HCT116 (cell line): ENCODE measurements at regions of chr9 and their contacts with region 1.

Region 1: GRCh38 chr9:131349881-131350563 is 43.9 kb upstream of the PRRC2B start:
- DNase-seq: peak; percentile 62
- ATAC-seq: peak; percentile 96
- H3K4me3 ChIP-seq: peak overlapping the region; percentile 19 to 50; a peak in 3 of 4 replicates
- H3K27ac ChIP-seq: no peak overlapping the region
- H3K4me1 ChIP-seq: peaks cover 0 to 9% of the 10 kb centered on the region in 2 experiments; a peak in 1 of 4 replicates
- H3K27me3 ChIP-seq: no peaks in the 10 kb centered on the region
- CTCF ChIP-seq: peak; percentile 81 to 93 (median 86)
- POLR2A ChIP-seq: no peak
- RAD21 ChIP-seq: peak; percentile 93

Region 2: GRCh38 chr9:131334629-131335367 is 15.2 kb before region 1 on chr9:
- CTCF ChIA-PET with region 1: interaction called, 25 read pairs
- POLR2A ChIA-PET with region 1: no interaction called
- RAD21 ChIA-PET with region 1: no interaction called
- intact Hi-C with region 1: no loop called
- DNase-seq: no peak
- ATAC-seq: no peak
- H3K4me3 ChIP-seq: no peak overlapping the region
- H3K27ac ChIP-seq: no peak overlapping the region
- H3K4me1 ChIP-seq: peaks cover 5 to 31% of the 10 kb centered on the region in 2 experiments
- H3K27me3 ChIP-seq: no peaks in the 10 kb centered on the region
- CTCF ChIP-seq: no peak
- POLR2A ChIP-seq: no peak
- RAD21 ChIP-seq: no peak

Region 3: GRCh38 chr9:131361202-131361833 is 11.3 kb after region 1 on chr9:
- CTCF ChIA-PET with region 1: interaction called, 17 read pairs
- POLR2A ChIA-PET with region 1: no interaction called
- RAD21 ChIA-PET with region 1: no interaction called
- intact Hi-C with region 1: no loop called
- DNase-seq: no peak
- ATAC-seq: peak; percentile 38; the same call in 1 of the 2 replicates
- H3K4me3 ChIP-seq: no peak overlapping the region
- H3K27ac ChIP-seq: no peak overlapping the region
- H3K4me1 ChIP-seq: peaks cover 7 to 15% of the 10 kb centered on the region in 2 experiments; a peak in 3 of 4 replicates
- H3K27me3 ChIP-seq: no peaks in the 10 kb centered on the region
- CTCF ChIP-seq: no peak
- POLR2A ChIP-seq: no peak
- RAD21 ChIP-seq: no peak

Region 4: DNA sequence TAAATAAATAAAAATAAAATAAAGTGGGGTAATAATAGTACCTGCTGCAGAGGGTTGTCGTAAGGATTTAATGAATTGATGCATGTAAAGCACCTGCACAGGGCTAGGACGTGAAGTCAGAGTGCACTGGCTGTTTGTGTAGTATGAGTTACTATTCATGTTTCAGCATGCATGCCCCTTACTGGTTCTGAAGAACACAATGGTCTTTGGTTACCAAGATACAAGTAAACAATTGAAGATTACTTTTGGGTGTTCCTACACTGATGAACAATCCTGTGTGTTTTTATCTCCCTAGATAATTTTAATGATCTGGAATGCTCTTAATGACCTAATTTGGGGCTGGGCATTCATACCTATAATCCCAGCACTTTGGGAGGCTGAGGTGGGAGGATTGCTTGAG is 20.6 kb after region 1 on chr9:
- CTCF ChIA-PET with region 1: interaction called, 12 read pairs
- POLR2A ChIA-PET with region 1: no interaction called
- RAD21 ChIA-PET with region 1: no interaction called
- intact Hi-C with region 1: no loop called
- DNase-seq: no peak
- ATAC-seq: no peak
- H3K4me3 ChIP-seq: no peak overlapping the region
- H3K27ac ChIP-seq: no peak overlapping the region
- H3K4me1 ChIP-seq: peaks cover 18 to 26% of the 10 kb centered on the region in 2 experiments; a peak in 3 of 4 replicates
- H3K27me3 ChIP-seq: no peaks in the 10 kb centered on the region
- CTCF ChIP-seq: no peak
- POLR2A ChIP-seq: no peak
- RAD21 ChIP-seq: no peak

Region 5: GRCh38 chr9:131478421-131478868 is 128.4 kb after region 1 on chr9:
- CTCF ChIA-PET with region 1: interaction called, 4 read pairs
- POLR2A ChIA-PET with region 1: no interaction called
- RAD21 ChIA-PET with region 1: no interaction called
- intact Hi-C with region 1: loop called (anchors 1 kb)
- DNase-seq: peak; percentile 3
- ATAC-seq: peak; percentile 71
- H3K4me3 ChIP-seq: no peak overlapping the region
- H3K27ac ChIP-seq: no peak overlapping the region
- H3K4me1 ChIP-seq: no peaks in the 10 kb centered on the region
- H3K27me3 ChIP-seq: no peaks in the 10 kb centered on the region
- CTCF ChIP-seq: peak; percentile 36 to 71 (median 58); a peak in 5 of 6 replicates
- POLR2A ChIP-seq: no peak
- RAD21 ChIP-seq: peak; percentile 33; the same call in 1 of the 2 replicates

Region 6: GRCh38 chr9:131755541-131756198 is 405.6 kb after region 1 on chr9:
- CTCF ChIA-PET with region 1: no interaction called
- POLR2A ChIA-PET with region 1: no interaction called
- RAD21 ChIA-PET with region 1: no interaction called
- intact Hi-C with region 1: loop called (anchors 5 kb)
- DNase-seq: peak; percentile 75
- ATAC-seq: peak; percentile 100
- H3K4me3 ChIP-seq: no peak overlapping the region
- H3K27ac ChIP-seq: no peak overlapping the region
- H3K4me1 ChIP-seq: peaks cover 0 to 4% of the 10 kb centered on the region in 2 experiments; a peak in 2 of 4 replicates
- H3K27me3 ChIP-seq: no peaks in the 10 kb centered on the region
- CTCF ChIP-seq: peak; percentile 86 to 87 (median 86)
- POLR2A ChIP-seq: no peak
- RAD21 ChIP-seq: peak; percentile 62